RWPE1 (cell line): ENCODE measurements at regions of chr22 and their contacts with region 1.

Region 1: GRCh38 chr22:40024201-40025061 is 29.7 kb downstream of the FAM83F start:
- DNase-seq: peak; percentile 69
- H3K27ac ChIP-seq: peak overlapping the region; percentile 93
- CTCF ChIP-seq: peak; percentile 91

Region 2: GRCh38 chr22:39534591-39535356 is 489.7 kb before region 1 on chr22:
- CTCF ChIA-PET with region 1: interaction called, 24 read pairs
- POLR2A ChIA-PET with region 1: no interaction called
- DNase-seq: peak; percentile 60
- H3K27ac ChIP-seq: peak overlapping the region; percentile 82
- CTCF ChIP-seq: peak; percentile 90

Region 3: DNA sequence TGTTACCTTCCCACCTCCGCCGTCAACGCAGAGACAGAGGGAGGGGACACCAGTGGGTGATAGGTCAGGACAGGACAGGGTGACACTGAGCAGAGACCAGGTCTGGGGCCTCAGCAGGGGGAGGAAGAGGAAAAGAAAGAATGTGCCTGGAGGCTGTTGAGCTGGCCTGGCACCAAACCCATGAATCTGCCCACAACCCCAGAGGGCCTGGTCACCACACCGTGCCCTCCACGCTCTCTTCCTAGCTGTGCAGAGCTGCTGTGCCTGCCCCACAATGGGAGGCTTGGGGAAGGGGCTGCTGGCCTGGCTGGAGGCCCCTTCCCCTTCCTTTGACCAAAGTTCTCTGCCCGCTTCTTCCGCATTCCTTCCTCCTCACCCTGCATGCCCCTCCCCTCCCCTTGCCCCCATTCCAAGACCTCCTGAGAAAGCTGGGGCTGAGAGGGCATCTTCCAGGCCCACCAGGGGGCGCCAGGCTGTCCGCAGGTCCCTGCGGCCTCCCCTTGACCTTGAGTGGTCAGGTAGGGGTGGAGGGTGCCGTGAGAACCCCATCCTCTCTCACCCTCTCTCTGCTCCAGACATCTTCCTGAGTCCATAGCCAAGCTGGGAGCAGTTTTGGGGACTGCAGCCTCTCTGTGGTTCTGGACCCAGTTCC is 464.9 kb before region 1 on chr22:
- CTCF ChIA-PET with region 1: interaction called, 10 read pairs
- POLR2A ChIA-PET with region 1: no interaction called
- DNase-seq: no peak
- H3K27ac ChIP-seq: no peak overlapping the region
- CTCF ChIP-seq: peak; percentile 27; the same call in 1 of the 2 replicates